HEK293 (cell line): ENCODE measurements at regions of chr11 and their contacts with region 1.

Region 1: DNA sequence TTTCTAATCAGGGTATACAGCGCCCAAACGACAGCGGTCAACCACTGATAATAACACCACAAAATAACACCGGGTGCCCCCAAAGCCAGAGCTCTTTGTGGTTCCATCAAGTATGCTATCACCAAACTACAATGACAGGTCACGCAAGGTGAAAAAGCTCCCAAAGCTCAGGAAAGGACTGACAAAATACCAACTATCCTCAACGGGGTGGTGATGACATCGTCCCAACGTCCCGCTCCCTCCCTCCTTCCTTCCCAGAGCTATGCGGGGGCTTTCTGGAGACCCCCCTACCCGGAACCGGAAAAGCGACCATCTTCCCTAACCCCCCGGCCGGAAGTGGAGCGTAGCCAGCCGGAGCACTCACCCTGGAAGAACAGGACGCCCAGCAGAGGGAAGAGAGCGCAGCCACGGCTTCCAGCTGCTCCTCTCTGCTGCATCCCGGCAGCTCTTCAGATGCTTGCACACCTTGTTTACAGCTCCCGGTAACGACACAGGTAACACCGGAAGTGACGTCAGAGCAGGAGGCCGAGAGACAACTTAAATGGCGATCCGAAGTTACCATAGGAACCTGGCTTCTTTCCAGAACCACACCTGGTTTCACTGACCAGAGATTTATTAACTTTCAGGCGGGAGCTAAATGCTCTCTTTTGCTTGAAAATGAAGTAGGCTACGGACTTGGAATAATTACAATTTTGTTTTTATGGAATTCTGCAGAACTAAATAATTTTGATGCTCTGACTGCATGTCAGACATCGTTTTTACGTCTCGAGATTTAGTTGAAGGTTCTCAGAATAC is at the start of gene MPZL3:
- H3K4me3 ChIP-seq: peak within 1 kb of the TSS; percentile 94
- H3K27ac ChIP-seq: peak within 1 kb of the TSS; percentile 86
- H3K4me1 ChIP-seq: no peaks in the 10 kb centered on the region
- CTCF ChIP-seq: no peak

Region 2: DNA sequence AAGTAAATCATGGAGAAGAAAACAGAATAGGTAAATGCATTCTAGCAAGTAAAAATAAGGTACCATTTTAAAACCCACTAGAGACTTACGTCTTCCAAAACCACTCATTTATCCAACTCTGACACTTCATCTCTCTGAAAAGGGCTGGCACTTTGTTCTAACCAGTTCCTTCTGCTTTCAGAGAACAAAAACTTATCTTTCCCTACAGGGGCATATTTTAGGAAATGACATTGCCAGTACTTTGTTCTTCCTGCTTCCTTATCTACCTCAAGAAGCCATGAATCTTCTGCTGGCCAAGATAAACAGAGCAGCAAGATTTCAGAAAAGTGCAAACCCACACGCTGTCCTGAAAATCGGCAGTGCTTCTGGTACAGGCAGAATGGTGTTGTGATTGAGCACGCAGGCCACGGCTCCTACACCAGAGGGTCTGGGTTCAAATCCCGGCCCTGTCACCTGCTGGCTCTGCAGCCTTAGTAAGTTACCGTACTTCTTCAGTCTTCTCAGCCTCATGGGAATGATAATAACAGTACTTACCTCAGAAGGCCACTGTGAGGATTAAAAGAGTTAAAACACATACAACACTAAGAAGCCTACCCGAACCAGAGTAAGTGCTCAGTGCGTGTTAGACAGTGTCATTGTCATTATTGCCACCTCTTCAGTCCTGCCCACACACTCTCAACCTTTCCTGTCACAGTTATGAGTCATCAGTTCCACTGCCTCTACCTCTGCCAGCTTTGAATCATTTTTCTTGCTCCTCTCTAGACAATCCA is 10.9 kb before region 1 on chr11:
- CTCF ChIA-PET with region 1: interaction called, 3 read pairs
- POLR2A ChIA-PET with region 1: interaction called, 12 read pairs
- H3K4me3 ChIP-seq: no peak overlapping the region
- H3K27ac ChIP-seq: no peak overlapping the region
- H3K4me1 ChIP-seq: no peaks in the 10 kb centered on the region
- CTCF ChIP-seq: no peak

Region 3: GRCh38 chr11:118263695-118264567 is 11.9 kb after region 1 on chr11 and contains the start of gene MPZL2:
- CTCF ChIA-PET with region 1: interaction called, 6 read pairs
- POLR2A ChIA-PET with region 1: interaction called, 11 read pairs
- H3K4me3 ChIP-seq: peak within 1 kb of the TSS; percentile 42
- H3K27ac ChIP-seq: peak within 1 kb of the TSS; percentile 11; the same call in 1 of the 2 replicates
- H3K4me1 ChIP-seq: no peaks in the 10 kb centered on the region
- CTCF ChIP-seq: peak; percentile 48; the same call in 1 of the 2 replicates